Transverse colon (tissue), 4 donors: ENCODE measurements at regions of chr11 and their contacts with region 1.

Region 1: DNA sequence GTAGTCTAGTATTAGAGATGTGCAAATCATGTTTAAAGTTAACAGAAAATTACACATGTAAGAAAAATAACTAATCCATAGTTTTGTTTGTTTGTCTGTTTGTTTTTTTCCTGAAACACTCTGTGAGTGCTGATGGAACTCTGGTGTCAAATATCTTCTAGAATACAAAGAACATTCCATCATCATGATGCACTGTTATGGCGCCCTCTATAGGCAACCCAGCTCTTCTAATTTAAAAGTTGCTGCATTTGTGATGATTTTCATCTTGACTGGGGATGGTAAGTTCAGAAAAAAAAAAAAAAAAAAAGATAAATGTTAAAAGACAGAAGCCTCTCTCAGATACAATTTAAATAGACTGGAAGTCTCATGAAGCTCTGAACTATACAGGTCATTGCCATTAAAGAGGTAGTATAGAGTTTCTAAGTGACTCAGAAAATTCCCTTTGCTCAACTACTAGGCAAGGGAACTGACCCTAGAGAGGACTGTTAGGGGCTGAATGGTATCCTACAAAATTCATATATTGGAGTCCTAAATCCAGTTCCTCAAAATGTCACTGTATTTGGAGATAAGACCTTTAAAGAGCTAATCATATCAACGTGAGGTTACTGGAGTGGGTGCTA is 597.2 kb upstream of the ANO3 start:
- DNase-seq: no peak
- H3K4me3 ChIP-seq: no peak overlapping the region
- H3K27ac ChIP-seq: no peak overlapping the region
- H3K4me1 ChIP-seq: no peaks in the 10 kb centered on the region
- H3K27me3 ChIP-seq: no peaks in the 10 kb centered on the region
- CTCF ChIP-seq: peak in 1 of 5 experiments; percentile 9
- EP300 ChIP-seq: no peak
- POLR2A ChIP-seq: no peak

Region 2: DNA sequence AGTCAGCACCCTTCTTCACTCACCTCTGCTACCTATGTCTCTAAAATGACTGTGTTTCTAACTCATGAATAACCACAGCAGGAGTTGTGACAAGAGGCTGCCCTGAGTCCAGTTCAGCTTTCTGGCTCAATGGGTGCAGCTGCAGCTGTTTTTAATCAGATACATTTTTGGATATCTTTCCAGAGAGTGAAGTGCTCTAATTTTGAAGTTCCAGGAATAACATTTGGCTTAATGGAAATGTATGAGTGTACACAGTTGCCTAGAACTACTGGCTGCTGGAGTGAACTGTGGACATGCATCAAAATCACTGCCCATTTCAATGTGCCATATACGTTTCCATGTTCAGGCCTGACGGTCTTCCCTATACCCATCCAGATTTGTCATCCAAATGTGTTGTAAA is 172.3 kb before region 1 on chr11:
- in situ Hi-C with region 1: loop called in 1 of 4 experiments (anchors 10 kb)
- intact Hi-C with region 1: no loop called
- DNase-seq: no peak
- H3K4me3 ChIP-seq: no peak overlapping the region
- H3K27ac ChIP-seq: no peak overlapping the region
- H3K4me1 ChIP-seq: no peaks in the 10 kb centered on the region
- H3K27me3 ChIP-seq: no peaks in the 10 kb centered on the region
- CTCF ChIP-seq: no peak
- EP300 ChIP-seq: no peak
- POLR2A ChIP-seq: no peak

Region 3: GRCh38 chr11:26247340-26247739 is 512.6 kb after region 1 on chr11:
- in situ Hi-C with region 1: no loop called
- intact Hi-C with region 1: no loop called
- DNase-seq: no peak
- H3K4me3 ChIP-seq: no peak overlapping the region
- H3K27ac ChIP-seq: no peak overlapping the region
- H3K4me1 ChIP-seq: no peaks in the 10 kb centered on the region
- H3K27me3 ChIP-seq: no peaks in the 10 kb centered on the region
- CTCF ChIP-seq: no peak
- EP300 ChIP-seq: no peak
- POLR2A ChIP-seq: no peak